Breast epithelium (tissue), 4 donors: ENCODE measurements at regions of chr12 and their contacts with region 1.

Region 1: DNA sequence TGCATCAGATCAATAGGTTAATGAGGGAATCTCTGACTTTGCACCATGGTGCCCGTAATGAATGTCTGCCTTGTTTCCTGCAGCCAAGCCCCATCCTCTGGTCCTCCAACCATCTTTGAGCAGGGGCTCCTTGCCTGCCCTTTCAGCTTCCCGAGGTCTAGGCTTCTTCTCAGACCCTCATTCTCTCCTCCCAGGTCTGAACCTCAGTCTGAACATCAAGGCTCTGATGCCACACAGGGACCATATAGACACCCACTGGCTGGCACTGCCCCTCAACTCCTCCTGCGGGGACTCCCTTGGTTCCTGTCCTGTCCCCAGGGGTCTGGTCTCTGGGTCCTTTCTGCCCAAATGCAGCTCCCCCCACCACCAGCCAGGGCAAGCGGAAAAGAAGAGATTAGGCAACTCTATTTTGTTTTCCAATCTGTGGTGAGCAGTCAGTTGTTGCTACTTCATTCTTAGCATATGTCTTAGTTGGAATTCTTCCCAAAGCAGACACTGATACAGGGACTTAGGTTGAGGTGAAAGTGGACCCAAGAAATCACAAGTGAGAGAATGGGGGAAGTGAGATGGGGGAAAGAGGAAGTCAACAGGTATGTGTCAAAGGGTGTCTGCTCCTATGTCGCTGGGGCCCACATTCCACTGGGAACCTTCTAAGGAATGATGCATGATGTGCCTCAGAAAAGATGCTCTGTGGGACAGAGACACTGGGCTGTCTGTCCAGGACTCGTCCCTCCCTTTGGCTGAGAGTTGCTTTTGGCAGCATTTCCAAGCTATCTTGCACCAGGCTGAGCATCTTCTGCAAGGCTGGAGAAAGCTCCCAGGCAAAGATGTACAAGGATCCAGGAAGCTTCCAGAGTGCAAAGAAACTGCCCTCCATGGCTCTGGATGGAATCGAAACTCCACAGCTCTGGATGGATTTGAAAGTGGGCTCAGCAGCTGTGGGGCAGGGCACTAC is 1096.5 kb upstream of the TMEM132C start:
- DNase-seq: no peak
- H3K4me3 ChIP-seq: no peak overlapping the region
- H3K27ac ChIP-seq: no peak overlapping the region
- H3K4me1 ChIP-seq: no peaks in the 10 kb centered on the region
- H3K27me3 ChIP-seq: no peaks in the 10 kb centered on the region
- CTCF ChIP-seq: no peak
- POLR2A ChIP-seq: no peak

Region 2: DNA sequence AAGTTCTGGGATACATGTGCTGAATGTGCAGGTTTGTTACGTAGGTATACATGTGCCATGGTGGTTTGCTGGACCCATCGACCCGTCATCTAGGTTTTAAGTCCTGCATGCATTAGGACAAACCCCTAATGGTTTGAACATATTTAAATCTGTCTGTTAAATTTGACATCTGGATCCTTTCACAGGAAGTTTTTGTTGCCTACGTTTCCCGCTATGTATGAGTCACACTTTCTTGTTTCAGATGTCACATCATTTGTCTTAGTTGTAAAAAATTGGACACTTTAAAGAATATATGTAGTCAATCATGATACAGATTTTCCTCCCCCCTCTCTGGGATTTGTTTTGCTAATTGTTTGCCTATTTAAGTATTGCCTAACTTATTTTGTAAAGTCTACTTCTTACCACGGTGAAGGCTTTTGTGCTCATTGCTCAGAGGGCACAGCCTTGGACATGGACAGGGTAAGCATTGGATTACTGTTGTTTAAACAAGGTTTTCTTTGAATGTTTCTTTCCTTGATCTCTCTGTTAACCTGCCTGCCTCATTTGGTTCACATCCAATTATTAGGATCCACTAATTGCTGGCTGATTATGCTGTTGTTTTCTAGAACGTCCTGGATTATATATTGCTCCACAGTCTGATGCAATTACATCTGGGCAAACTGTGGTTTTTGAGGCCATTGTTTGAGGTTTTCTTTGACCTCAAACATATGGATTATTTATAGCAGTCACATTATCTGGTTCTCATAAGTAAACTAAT is 663.9 kb before region 1 on chr12:
- intact Hi-C with region 1: no loop called
- DNase-seq: no peak
- H3K4me3 ChIP-seq: no peak overlapping the region
- H3K27ac ChIP-seq: no peak overlapping the region
- H3K4me1 ChIP-seq: no peaks in the 10 kb centered on the region
- H3K27me3 ChIP-seq: no peaks in the 10 kb centered on the region
- CTCF ChIP-seq: no peak
- POLR2A ChIP-seq: no peak

Region 3: GRCh38 chr12:126747530-126748149 is 422.9 kb before region 1 on chr12:
- intact Hi-C with region 1: no loop called
- DNase-seq: no peak
- H3K4me3 ChIP-seq: no peak overlapping the region
- H3K27ac ChIP-seq: no peak overlapping the region
- H3K4me1 ChIP-seq: no peaks in the 10 kb centered on the region
- H3K27me3 ChIP-seq: no peaks in the 10 kb centered on the region
- CTCF ChIP-seq: peak in 2 of 3 donors; percentile 36 to 42
- POLR2A ChIP-seq: no peak

Region 4: GRCh38 chr12:127194176-127194575 is 23.7 kb after region 1 on chr12:
- intact Hi-C with region 1: loop called (anchors 1 kb)
- DNase-seq: no peak
- H3K4me3 ChIP-seq: no peak overlapping the region
- H3K27ac ChIP-seq: no peak overlapping the region
- H3K4me1 ChIP-seq: no peaks in the 10 kb centered on the region
- H3K27me3 ChIP-seq: peaks cover 0 to 4% of the 10 kb centered on the region in 2 donors
- CTCF ChIP-seq: no peak
- POLR2A ChIP-seq: no peak